ENCODE measurements at regions of chr9 and their contacts with region 1.

Region 1: GRCh38 chr9:85630676-85631075 is 111.1 kb downstream of the AGTPBP1 start:
- DNase-seq: no peak

Region 2: DNA sequence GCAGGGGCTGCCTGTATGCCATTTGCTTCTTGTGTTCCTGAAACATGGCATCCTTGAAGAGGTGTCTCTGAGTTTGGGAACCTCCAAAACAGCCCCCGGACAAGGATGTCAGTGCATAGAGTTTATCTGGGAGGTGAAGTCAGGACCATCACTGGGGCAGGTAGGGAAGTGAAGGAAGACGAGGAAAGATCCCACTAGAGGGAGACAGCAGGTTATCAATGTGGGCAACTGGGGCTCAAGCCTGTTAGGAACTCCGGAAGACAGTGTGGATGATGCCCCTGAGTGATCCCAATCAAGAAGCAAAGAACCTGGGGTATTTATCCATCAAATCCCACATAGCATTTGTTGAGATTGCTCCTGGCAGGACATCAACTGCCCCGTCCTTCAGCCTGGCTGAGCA is 122.1 kb before region 1 on chr9:
- intact Hi-C with region 1: no loop called
- DNase-seq: no peak

Region 3: DNA sequence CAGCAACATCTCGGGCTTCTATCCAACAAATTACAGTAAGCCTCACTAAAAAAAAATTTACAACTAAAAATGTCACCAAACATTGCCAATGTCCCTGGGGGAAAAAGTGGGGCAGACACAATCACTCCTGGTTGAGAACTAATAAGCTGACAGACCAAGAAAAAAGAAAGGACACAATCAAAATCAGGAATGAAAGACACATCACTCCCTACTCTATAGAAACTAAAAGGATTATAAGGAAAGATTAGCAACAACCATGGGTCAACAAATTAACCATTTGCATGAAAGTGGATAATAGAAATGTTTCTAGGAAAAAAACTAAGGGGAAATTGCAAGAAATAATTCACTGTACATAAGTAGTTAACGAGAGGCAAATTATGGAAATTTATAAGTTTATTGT is 57.7 kb after region 1 on chr9:
- intact Hi-C with region 1: loop called (anchors 10 kb)
- DNase-seq: no peak